Transverse colon (tissue), 4 donors: ENCODE measurements at regions of chr7 and their contacts with region 1.

Region 1: DNA sequence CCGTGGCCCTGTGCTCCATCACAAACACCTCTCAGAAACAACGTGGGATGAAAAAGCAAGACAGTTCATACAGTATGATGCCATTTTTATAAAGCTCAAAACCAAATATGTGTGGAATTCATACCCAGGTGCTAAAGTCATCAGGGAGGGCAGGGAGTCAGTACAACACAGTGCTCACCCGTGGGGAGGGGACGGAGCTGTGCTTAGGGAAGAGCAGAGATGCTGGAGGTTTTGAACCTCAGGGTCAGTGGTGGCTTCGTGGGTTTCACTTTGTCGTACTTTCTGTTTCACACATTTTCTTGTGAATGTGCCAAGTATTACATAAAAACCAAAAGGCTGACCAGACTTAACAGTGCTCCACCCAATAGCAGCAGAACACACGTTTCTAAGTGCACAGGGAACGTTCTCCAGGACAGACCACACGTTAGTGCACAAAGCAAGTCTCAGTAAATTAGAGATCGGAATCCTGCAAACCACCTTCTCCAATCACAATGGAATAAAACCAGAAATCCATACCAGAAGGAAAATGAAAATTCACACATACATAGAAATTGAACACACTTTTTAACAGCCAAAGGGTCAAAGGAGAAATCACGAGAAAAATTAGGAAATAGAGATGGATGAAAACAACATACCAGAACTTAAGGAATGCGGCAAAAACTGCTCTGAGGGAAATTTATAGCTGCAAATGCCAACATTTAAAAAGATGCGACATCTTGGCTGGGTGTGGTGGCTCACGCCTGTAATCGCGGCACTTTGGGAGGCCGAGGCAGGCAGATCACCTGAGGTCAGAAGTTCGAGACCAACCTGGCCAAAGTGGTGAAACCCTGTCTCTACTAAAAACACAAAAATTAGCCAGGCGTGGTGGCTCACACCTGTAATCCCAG is 21.4 kb downstream of the ZMIZ2 start:
- DNase-seq: peak; percentile 44
- H3K4me3 ChIP-seq: no peak overlapping the region
- H3K27ac ChIP-seq: peak overlapping the region; percentile 68 to 85 (median 78)
- H3K4me1 ChIP-seq: peaks cover 26 to 36% (median 34%) of the 10 kb centered on the region in 4 donors
- H3K27me3 ChIP-seq: no peaks in the 10 kb centered on the region
- CTCF ChIP-seq: no peak
- EP300 ChIP-seq: no peak
- POLR2A ChIP-seq: no peak

Region 2: DNA sequence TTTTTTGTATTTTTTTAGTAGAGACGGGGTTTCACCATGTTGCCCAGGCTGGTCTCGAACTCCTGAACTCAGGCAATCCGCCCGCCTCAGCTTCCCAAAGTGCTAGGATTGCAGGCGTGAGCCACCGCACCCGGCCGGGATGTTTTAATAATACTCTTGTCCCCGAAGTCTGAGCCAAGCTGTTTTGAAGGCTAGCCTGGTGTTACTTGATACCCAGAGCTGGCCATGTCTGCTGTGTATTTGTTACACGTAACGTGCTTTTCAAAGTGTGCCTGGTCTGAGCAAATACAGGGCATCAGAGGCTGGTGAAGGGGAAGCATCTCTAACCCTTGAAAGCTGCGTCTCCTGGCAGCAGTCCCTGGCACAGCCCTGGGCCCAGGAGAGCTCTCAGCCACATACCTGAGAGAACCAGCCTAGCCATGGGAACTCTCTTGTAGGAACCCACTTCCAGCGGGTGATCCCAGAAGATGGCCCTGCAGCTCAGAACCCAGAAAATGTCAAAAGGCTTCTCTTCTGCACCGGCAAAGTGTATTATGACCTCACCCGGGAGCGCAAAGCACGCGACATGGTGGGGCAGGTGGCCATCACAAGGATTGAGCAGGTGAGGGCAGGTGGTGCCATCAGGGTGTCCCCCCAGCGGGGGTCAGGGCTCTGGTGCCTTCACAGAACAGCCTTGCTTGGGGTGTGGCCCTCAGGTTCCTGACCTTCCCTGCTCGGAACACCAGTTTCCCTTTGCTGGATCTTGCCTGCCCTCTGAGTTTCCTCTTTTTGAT is 63.0 kb before region 1 on chr7:
- in situ Hi-C with region 1: no loop called
- intact Hi-C with region 1: no loop called
- DNase-seq: no peak
- H3K4me3 ChIP-seq: no peak overlapping the region
- H3K27ac ChIP-seq: no peak overlapping the region
- H3K4me1 ChIP-seq: no peaks in the 10 kb centered on the region
- H3K27me3 ChIP-seq: no peaks in the 10 kb centered on the region
- CTCF ChIP-seq: no peak
- EP300 ChIP-seq: no peak
- POLR2A ChIP-seq: no peak

Region 3: DNA sequence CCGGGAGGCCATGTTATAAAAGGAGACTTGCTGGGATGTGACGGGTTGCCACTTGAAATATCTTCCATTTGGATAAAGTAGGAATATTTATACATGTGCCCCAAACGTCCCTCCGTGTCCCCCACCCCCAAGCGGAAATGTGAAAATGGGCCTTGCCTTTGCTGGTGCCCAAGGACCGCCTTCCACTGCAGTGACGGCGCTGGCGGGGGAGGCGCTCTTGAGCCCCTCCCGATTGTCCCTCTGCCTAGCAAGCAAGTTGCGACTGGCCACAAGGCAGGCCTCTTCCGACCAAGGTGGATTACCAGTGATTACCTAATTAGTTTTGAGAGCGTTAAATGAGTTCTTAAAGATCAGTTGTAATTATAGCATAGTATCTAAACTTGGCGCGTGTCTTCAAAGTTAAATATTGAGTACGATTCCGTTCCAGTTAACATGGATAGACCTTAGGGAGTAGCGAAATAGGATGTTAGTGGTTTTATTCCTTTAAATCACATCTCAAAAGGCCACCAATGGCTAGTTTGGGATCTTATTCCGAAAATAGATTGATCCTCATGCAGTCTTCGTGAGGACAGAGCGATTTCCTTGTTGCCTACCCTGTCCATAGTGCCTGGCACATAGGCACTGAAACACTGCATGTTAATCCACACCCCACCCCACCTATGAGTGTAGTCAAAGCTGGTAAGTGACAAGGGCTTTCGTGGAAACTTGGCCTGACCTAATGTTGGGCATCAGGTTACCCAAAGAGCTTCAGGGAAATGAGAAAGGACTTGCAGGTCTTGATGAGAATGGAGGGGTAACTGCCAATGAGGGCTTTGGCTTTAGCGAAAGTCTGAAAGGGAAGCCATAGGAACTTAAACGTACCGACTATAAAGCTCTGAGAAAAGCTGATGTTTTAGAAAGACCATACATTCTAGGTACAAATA is 27.6 kb after region 1 on chr7:
- in situ Hi-C with region 1: no loop called
- intact Hi-C with region 1: loop called (anchors 1 kb)
- DNase-seq: peak; percentile 93
- H3K4me3 ChIP-seq: peak overlapping the region; percentile 79 to 94 (median 82)
- H3K27ac ChIP-seq: peak overlapping the region; percentile 99 to 100 (median 100)
- H3K4me1 ChIP-seq: peaks cover 8 to 28% (median 22%) of the 10 kb centered on the region in 4 donors
- H3K27me3 ChIP-seq: no peaks in the 10 kb centered on the region
- CTCF ChIP-seq: peak; percentile 39 to 51 (median 47)
- EP300 ChIP-seq: no peak
- POLR2A ChIP-seq: peak; percentile 37